Ovary (tissue), 10 donors: ENCODE measurements at regions of chr12 and their contacts with region 1.

Region 1: GRCh38 chr12:128204711-128205110 is 62.3 kb upstream of the TMEM132C start:
- DNase-seq: no peak
- H3K4me3 ChIP-seq: no peak overlapping the region
- H3K27ac ChIP-seq: no peak overlapping the region
- H3K4me1 ChIP-seq: no peaks in the 10 kb centered on the region
- H3K27me3 ChIP-seq: no peaks in the 10 kb centered on the region
- CTCF ChIP-seq: no peak
- EP300 ChIP-seq: no peak
- POLR2A ChIP-seq: no peak

Region 2: GRCh38 chr12:128394137-128394536 is 189.4 kb after region 1 on chr12:
- intact Hi-C with region 1: no loop called
- DNase-seq: no peak
- H3K4me3 ChIP-seq: no peak overlapping the region
- H3K27ac ChIP-seq: no peak overlapping the region
- H3K4me1 ChIP-seq: no peaks in the 10 kb centered on the region
- H3K27me3 ChIP-seq: no peaks in the 10 kb centered on the region
- CTCF ChIP-seq: no peak
- EP300 ChIP-seq: no peak
- POLR2A ChIP-seq: no peak

Region 3: GRCh38 chr12:128415036-128415560 is 210.4 kb after region 1 on chr12:
- intact Hi-C with region 1: no loop called
- DNase-seq: no peak
- H3K4me3 ChIP-seq: no peak overlapping the region
- H3K27ac ChIP-seq: no peak overlapping the region
- H3K4me1 ChIP-seq: no peaks in the 10 kb centered on the region
- H3K27me3 ChIP-seq: no peaks in the 10 kb centered on the region
- CTCF ChIP-seq: no peak
- EP300 ChIP-seq: no peak
- POLR2A ChIP-seq: no peak

Region 4: GRCh38 chr12:129911428-129912049 is 1706.8 kb after region 1 on chr12:
- intact Hi-C with region 1: loop called in 1 of 4 experiments (anchors 10 kb)
- DNase-seq: no peak
- H3K4me3 ChIP-seq: no peak overlapping the region
- H3K27ac ChIP-seq: no peak overlapping the region
- H3K4me1 ChIP-seq: no peaks in the 10 kb centered on the region
- H3K27me3 ChIP-seq: no peaks in the 10 kb centered on the region
- CTCF ChIP-seq: no peak
- EP300 ChIP-seq: no peak
- POLR2A ChIP-seq: no peak